SK-N-SH (cell line): ENCODE measurements at regions of chr11 and their contacts with region 1.

Region 1: GRCh38 chr11:34174412-34175041 is 69.1 kb downstream of the NAT10 start:
- DNase-seq: peak; percentile 95
- H3K4me3 ChIP-seq: peak overlapping the region; percentile 27 to 47; a peak in 2 of 4 replicates
- H3K27ac ChIP-seq: no peak overlapping the region
- H3K4me1 ChIP-seq: peaks cover 5 to 10% of the 10 kb centered on the region in 2 experiments; a peak in 2 of 4 replicates
- H3K27me3 ChIP-seq: no peaks in the 10 kb centered on the region
- CTCF ChIP-seq: peak; percentile 90
- EP300 ChIP-seq: no peak; a peak in 2 of 4 replicates
- RAD21 ChIP-seq: peak; percentile 93

Region 2: GRCh38 chr11:34080609-34081008 is 93.9 kb before region 1 on chr11:
- CTCF ChIA-PET with region 1: no interaction called
- POLR2A ChIA-PET with region 1: no interaction called
- DNase-seq: no peak
- H3K4me3 ChIP-seq: no peak overlapping the region
- H3K27ac ChIP-seq: no peak overlapping the region
- H3K4me1 ChIP-seq: peaks cover 0 to 9% of the 10 kb centered on the region in 2 experiments; a peak in 1 of 4 replicates
- H3K27me3 ChIP-seq: no peaks in the 10 kb centered on the region
- CTCF ChIP-seq: no peak
- EP300 ChIP-seq: no peak
- RAD21 ChIP-seq: no peak

Region 3: GRCh38 chr11:34149786-34150185 is 24.7 kb before region 1 on chr11:
- CTCF ChIA-PET with region 1: interaction called, 61 read pairs
- POLR2A ChIA-PET with region 1: no interaction called
- DNase-seq: peak; percentile 79
- H3K4me3 ChIP-seq: no peak overlapping the region
- H3K27ac ChIP-seq: no peak overlapping the region
- H3K4me1 ChIP-seq: peaks cover 0 to 28% of the 10 kb centered on the region in 2 experiments; a peak in 3 of 4 replicates
- H3K27me3 ChIP-seq: no peaks in the 10 kb centered on the region
- CTCF ChIP-seq: peak; percentile 55
- EP300 ChIP-seq: no peak
- RAD21 ChIP-seq: peak; percentile 73

Region 4: GRCh38 chr11:34192481-34193401 is 18.2 kb after region 1 on chr11:
- CTCF ChIA-PET with region 1: interaction called, 45 read pairs
- POLR2A ChIA-PET with region 1: interaction called, 4 read pairs
- DNase-seq: peak; percentile 69
- H3K4me3 ChIP-seq: peak overlapping the region; percentile 17 to 32; a peak in 2 of 4 replicates
- H3K27ac ChIP-seq: peak overlapping the region; percentile 66 to 87
- H3K4me1 ChIP-seq: peaks cover 21 to 30% of the 10 kb centered on the region in 2 experiments; a peak in 3 of 4 replicates
- H3K27me3 ChIP-seq: no peaks in the 10 kb centered on the region
- CTCF ChIP-seq: no peak
- EP300 ChIP-seq: peak in 1 of 2 experiments; percentile 49; a peak in 1 of 4 replicates
- RAD21 ChIP-seq: peak; percentile 7; the same call in 1 of the 2 replicates

Region 5: GRCh38 chr11:34252651-34253050 is 78.1 kb after region 1 on chr11:
- CTCF ChIA-PET with region 1: interaction called, 22 read pairs
- POLR2A ChIA-PET with region 1: no interaction called
- DNase-seq: no peak
- H3K4me3 ChIP-seq: no peak overlapping the region
- H3K27ac ChIP-seq: no peak overlapping the region
- H3K4me1 ChIP-seq: peaks cover 17 to 22% of the 10 kb centered on the region in 2 experiments; a peak in 2 of 4 replicates
- H3K27me3 ChIP-seq: no peaks in the 10 kb centered on the region
- CTCF ChIP-seq: no peak
- EP300 ChIP-seq: no peak
- RAD21 ChIP-seq: no peak

Region 6: GRCh38 chr11:34302046-34302921 is 127.8 kb after region 1 on chr11:
- CTCF ChIA-PET with region 1: interaction called, 13 read pairs
- POLR2A ChIA-PET with region 1: interaction called, 3 read pairs
- DNase-seq: no peak
- H3K4me3 ChIP-seq: no peak overlapping the region
- H3K27ac ChIP-seq: peak overlapping the region; percentile 71 to 73
- H3K4me1 ChIP-seq: peaks cover 37 to 41% of the 10 kb centered on the region in 2 experiments
- H3K27me3 ChIP-seq: no peaks in the 10 kb centered on the region
- CTCF ChIP-seq: no peak
- EP300 ChIP-seq: peak; percentile 32 to 89; a peak in 3 of 4 replicates
- RAD21 ChIP-seq: no peak

Region 7: DNA sequence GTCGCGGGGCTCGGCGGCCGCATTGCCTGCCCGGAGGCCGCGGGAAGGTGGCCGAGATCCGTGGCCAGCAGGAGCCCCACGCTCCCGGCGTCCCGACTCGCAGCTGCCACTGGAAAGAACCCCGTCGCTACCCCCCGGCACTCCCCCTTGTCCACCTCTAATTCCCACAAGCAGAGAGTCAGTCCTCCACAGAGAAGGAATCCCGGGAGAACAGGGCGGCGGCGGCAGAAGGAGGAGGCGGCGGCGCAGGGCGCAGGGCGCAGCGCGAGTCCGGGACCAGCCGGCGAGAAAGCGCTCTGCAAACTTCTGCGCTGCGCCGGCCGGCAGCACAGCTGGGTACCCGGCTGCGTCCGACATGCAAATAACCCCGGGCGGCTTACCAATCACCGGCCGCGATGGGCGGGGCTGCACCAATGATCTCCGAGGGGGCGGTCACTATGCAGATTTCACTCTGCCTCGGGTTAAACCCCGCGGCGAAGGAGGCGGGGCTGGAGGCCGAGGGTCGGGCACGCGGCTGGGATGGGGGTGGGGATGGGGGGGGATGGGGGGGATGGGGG is 183.3 kb after region 1 on chr11 and contains the start of gene ABTB2:
- CTCF ChIA-PET with region 1: interaction called, 240 read pairs
- POLR2A ChIA-PET with region 1: interaction called, 20 read pairs
- DNase-seq: peak; percentile 98
- H3K4me3 ChIP-seq: peak within 1 kb of the TSS; percentile 72 to 76
- H3K27ac ChIP-seq: peak within 1 kb of the TSS; percentile 35 to 63; a peak in 3 of 4 replicates
- H3K4me1 ChIP-seq: peaks cover 18 to 33% of the 10 kb centered on the region in 2 experiments; a peak in 3 of 4 replicates
- H3K27me3 ChIP-seq: no peaks in the 10 kb centered on the region
- CTCF ChIP-seq: no peak
- EP300 ChIP-seq: no peak
- RAD21 ChIP-seq: 0 out of 2 replicates have a peak, but pooled peaks have one; percentile 15
- polyA plus RNA-seq, gene ABTB2: 4.9 and 7.8 TPM in 2 replicates

Region 8: GRCh38 chr11:34379079-34379478 is 204.6 kb after region 1 on chr11:
- CTCF ChIA-PET with region 1: no interaction called
- POLR2A ChIA-PET with region 1: no interaction called
- DNase-seq: no peak
- H3K4me3 ChIP-seq: no peak overlapping the region; a peak in 1 of 4 replicates
- H3K27ac ChIP-seq: no peak overlapping the region
- H3K4me1 ChIP-seq: no peaks in the 10 kb centered on the region
- H3K27me3 ChIP-seq: no peaks in the 10 kb centered on the region
- CTCF ChIP-seq: no peak
- EP300 ChIP-seq: no peak
- RAD21 ChIP-seq: no peak